PC-3 (cell line): ENCODE measurements at regions of chr21 and their contacts with region 1.

Region 1: DNA sequence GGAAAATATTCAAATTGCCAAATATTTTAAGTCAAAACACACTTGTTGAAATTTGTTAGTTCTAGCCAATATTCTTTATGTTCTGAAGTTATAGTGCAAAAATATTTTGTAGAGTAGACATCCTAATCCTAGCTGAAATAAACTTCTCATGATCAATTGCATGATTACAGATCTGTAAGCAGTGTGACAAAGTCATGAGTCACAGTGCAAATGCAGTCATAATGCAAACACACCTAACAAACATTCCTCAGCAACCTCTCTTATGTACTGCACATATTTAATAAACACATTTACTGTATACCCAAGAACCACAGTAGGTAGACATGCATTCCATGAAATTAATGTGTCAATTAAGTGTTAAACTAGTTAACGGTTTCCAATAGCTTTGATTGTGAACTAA is 1857.4 kb downstream of the NCAM2 start:
- DNase-seq: peak; percentile 92
- ATAC-seq: peak; percentile 100
- H3K4me3 ChIP-seq: no peak overlapping the region
- H3K27ac ChIP-seq: peak overlapping the region; percentile 36
- H3K4me1 ChIP-seq: peaks cover 14% of the 10 kb centered on the region
- H3K27me3 ChIP-seq: no peaks in the 10 kb centered on the region
- CTCF ChIP-seq: no peak

Region 2: GRCh38 chr21:22885079-22885478 is 29.5 kb after region 1 on chr21:
- CTCF ChIA-PET with region 1: no interaction called
- POLR2A ChIA-PET with region 1: interaction called, 3 read pairs
- intact Hi-C with region 1: loop called (anchors 2 kb)
- DNase-seq: peak; percentile 92
- ATAC-seq: peak; percentile 83
- H3K4me3 ChIP-seq: peak overlapping the region; percentile 49
- H3K27ac ChIP-seq: peak overlapping the region; percentile 65
- H3K4me1 ChIP-seq: peaks cover 32% of the 10 kb centered on the region
- H3K27me3 ChIP-seq: no peaks in the 10 kb centered on the region
- CTCF ChIP-seq: no peak